HEK293T (cell line): ENCODE measurements at regions of chr5 and their contacts with region 1.

Region 1: DNA sequence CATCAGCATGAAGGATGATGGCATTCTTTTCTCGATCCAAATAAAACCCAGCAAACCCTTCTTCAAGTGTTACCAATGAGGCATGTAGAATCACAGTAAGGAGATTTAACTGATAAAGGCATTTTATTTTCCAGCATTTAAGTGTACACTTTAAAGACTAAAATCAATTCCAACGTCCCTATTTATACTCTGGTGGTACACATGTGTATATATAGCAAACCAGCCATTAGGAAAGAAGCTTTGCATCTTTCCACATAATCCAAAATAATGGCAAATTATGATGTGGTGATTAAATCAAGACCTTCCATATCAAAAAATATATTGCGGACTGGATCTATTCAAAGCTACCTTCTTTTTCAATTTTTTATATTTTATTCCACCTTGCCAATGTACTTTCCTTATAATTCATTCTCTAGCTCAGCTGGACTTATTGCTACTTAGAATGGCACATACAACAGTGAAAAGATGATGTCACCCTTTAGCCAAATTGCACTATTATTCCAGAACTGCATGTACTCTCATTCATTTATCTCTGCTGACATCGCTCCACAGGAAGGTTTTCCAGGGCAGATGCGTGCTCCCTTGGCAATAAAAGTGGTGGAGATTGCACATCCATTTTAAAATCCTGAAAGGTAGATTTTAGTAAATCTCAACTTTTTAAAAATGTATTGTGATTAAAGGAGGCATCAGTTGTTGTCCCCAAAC is 63.3 kb upstream of the SLC30A5 start:
- DNase-seq: no peak

Region 2: GRCh38 chr5:69042915-69043658 is 12.6 kb after region 1 on chr5:
- CTCF ChIA-PET with region 1: interaction called, 13 read pairs
- POLR2A ChIA-PET with region 1: interaction called, 3 read pairs
- DNase-seq: peak; percentile 75